IMR-90 (cell line): ENCODE measurements at regions of chr12 and their contacts with region 1.

Region 1: GRCh38 chr12:27619308-27619707 is 76.9 kb upstream of the REP15 start:
- DNase-seq: peak; percentile 90
- ATAC-seq: peak; percentile 61
- H3K4me3 ChIP-seq: no peak overlapping the region
- H3K27ac ChIP-seq: no peak overlapping the region
- H3K4me1 ChIP-seq: peaks cover 16% of the 10 kb centered on the region
- H3K27me3 ChIP-seq: no peaks in the 10 kb centered on the region
- CTCF ChIP-seq: no peak
- POLR2A ChIP-seq: no peak
- RAD21 ChIP-seq: no peak

Region 2: GRCh38 chr12:27305673-27306456 is 313.4 kb before region 1 on chr12:
- CTCF ChIA-PET with region 1: no interaction called
- POLR2A ChIA-PET with region 1: no interaction called
- dilution Hi-C with region 1: no loop called
- in situ Hi-C with region 1: no loop called
- intact Hi-C with region 1: no loop called
- DNase-seq: peak; percentile 65
- ATAC-seq: peak; percentile 35; the same call in 1 of the 2 replicates
- H3K4me3 ChIP-seq: no peak overlapping the region
- H3K27ac ChIP-seq: no peak overlapping the region
- H3K4me1 ChIP-seq: peaks cover 4% of the 10 kb centered on the region
- H3K27me3 ChIP-seq: no peaks in the 10 kb centered on the region
- CTCF ChIP-seq: peak; percentile 64
- POLR2A ChIP-seq: no peak
- RAD21 ChIP-seq: peak; percentile 71

Region 3: DNA sequence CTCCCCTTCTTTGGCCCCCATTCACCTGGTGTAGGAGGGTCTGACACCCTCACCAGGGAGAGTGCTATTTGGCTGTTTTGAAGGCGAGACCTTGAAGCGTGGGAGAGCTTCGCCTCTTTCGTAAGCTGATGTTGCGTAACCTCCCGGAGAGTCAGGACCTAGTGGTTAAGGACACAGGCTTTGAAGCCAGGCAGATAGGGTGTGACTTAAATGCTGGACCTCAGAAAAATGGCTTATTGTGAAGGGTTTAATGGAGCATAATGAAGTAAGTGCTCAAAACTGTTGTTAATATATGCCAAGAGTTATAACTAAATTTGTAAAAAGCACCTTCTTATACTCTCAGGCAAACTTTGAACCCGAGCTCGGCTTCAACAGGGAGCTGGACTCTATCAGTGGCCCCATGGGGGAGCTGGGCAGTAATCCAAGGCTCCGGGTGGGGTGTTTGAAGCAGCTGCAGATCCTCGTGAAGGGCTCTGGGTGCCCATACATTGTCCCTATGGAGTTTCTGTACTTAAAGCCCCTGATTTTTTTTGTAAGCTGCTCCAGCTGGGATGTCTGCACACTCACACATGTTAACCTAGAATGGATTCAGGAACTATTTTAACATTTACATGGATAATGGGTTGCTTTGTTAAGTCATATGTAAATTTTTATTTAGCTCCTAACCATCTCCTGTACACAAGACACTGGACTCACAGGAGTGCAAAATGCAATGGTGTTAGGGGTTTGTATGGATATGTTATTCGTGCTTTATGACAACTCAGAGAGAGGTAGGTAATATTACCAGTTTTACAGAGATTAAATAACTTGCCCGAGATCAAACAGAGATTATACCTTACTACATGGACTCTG is 69.3 kb before region 1 on chr12:
- CTCF ChIA-PET with region 1: no interaction called
- POLR2A ChIA-PET with region 1: no interaction called
- dilution Hi-C with region 1: no loop called
- in situ Hi-C with region 1: no loop called
- intact Hi-C with region 1: loop called (anchors 5 kb)
- DNase-seq: peak; percentile 97
- ATAC-seq: peak; percentile 70
- H3K4me3 ChIP-seq: peak overlapping the region; percentile 9; the same call in 1 of the 2 replicates
- H3K27ac ChIP-seq: peak overlapping the region; percentile 90
- H3K4me1 ChIP-seq: peaks cover 36% of the 10 kb centered on the region
- H3K27me3 ChIP-seq: no peaks in the 10 kb centered on the region
- CTCF ChIP-seq: no peak
- POLR2A ChIP-seq: no peak
- RAD21 ChIP-seq: no peak; the same call in 1 of the 2 replicates

Region 4: GRCh38 chr12:28035500-28035899 is 416.2 kb after region 1 on chr12:
- CTCF ChIA-PET with region 1: no interaction called
- POLR2A ChIA-PET with region 1: no interaction called
- dilution Hi-C with region 1: no loop called
- in situ Hi-C with region 1: no loop called
- intact Hi-C with region 1: no loop called
- DNase-seq: peak; percentile 87
- ATAC-seq: no peak; the same call in 1 of the 2 replicates
- H3K4me3 ChIP-seq: no peak overlapping the region
- H3K27ac ChIP-seq: no peak overlapping the region
- H3K4me1 ChIP-seq: peaks cover 6% of the 10 kb centered on the region
- H3K27me3 ChIP-seq: no peaks in the 10 kb centered on the region
- CTCF ChIP-seq: no peak
- POLR2A ChIP-seq: no peak
- RAD21 ChIP-seq: no peak